Heart left ventricle (tissue), 16 donors: ENCODE measurements at regions of chr10 and their contacts with region 1.

Region 1: GRCh38 chr10:38016354-38016753 is 5.9 kb downstream of the ZNF33A start:
- DNase-seq: no peak
- ATAC-seq: no peak
- H3K4me3 ChIP-seq: no peak overlapping the region
- H3K27ac ChIP-seq: no peak overlapping the region
- H3K4me1 ChIP-seq: peaks cover 0 to 10% (median 6%) of the 10 kb centered on the region in 12 donors
- H3K27me3 ChIP-seq: no peaks in the 10 kb centered on the region
- CTCF ChIP-seq: no peak
- POLR2A ChIP-seq: no peak

Region 2: GRCh38 chr10:38038107-38038931 is 22.0 kb after region 1 on chr10:
- intact Hi-C with region 1: loop called in 1 of 10 experiments (anchors 2 kb)
- DNase-seq: no peak
- ATAC-seq: no peak
- H3K4me3 ChIP-seq: peak overlapping the region in 8 of 12 donors; percentile 1 to 27 (median 16)
- H3K27ac ChIP-seq: peak overlapping the region in 2 of 12 donors; percentile 19 to 73
- H3K4me1 ChIP-seq: peaks cover 0 to 18% (median 0%) of the 10 kb centered on the region in 12 donors
- H3K27me3 ChIP-seq: no peaks in the 10 kb centered on the region
- CTCF ChIP-seq: no peak
- POLR2A ChIP-seq: no peak